GM12878 (cell line): ENCODE measurements at regions of chr4 and their contacts with region 1.

Region 1: GRCh38 chr4:25938787-25939186 is 24.8 kb downstream of the SMIM20 start:
- DNase-seq: peak; percentile 85
- ATAC-seq: peak; percentile 96
- H3K4me3 ChIP-seq: no peak overlapping the region; the same call in 1 of the 2 replicates
- H3K27ac ChIP-seq: no peak overlapping the region; the same call in 1 of the 2 replicates
- H3K4me1 ChIP-seq: peaks cover 11% of the 10 kb centered on the region; the same call in 1 of the 2 replicates
- H3K27me3 ChIP-seq: no peaks in the 10 kb centered on the region
- CTCF ChIP-seq: no peak
- EP300 ChIP-seq: peak in 1 of 2 experiments; percentile 50; a peak in 1 of 4 replicates
- POLR2A ChIP-seq: no peak
- RAD21 ChIP-seq: no peak

Region 2: DNA sequence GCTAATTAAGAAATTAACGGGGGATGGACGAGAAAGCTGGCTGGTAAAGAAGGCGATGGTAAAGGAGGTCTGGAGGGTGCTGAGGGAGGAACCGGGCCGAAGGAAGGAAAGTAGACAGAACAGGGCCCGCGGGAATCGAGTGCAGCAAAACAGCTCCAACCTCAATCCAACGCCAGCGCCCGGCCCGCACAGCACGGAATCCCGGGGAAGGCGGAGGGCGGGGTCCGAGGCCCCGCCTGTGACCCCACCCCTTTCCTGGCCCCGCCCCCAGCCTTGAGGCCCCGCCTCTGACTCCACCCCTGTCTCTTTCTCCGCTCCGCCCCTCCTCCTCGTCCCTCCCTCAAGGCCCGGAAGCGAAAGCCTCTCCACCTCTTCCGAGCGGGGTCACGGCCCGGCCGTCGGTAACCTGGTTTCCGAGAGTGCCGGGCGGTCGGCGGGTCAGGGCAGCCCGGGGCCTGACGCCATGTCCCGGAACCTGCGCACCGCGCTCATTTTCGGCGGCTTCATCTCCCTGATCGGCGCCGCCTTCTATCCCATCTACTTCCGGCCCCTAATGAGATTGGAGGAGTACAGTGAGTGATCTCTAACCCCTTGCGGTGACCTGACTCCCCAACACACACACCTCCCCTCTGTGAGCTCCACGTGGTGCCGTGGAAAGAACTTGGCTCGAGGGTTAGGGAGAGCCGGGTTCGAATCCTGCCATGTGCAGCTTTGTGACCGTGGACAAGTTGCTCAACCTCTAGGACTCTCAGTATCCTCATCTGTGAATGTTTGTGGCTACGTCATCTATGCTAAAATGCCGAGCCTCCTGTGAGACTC is 24.7 kb before region 1 on chr4 and contains the start of gene SMIM20:
- CTCF ChIA-PET with region 1: no interaction called
- POLR2A ChIA-PET with region 1: no interaction called
- RAD21 ChIA-PET with region 1: interaction called, 5 read pairs
- SMC1A ChIA-PET with region 1: interaction called, 3 read pairs
- in situ Hi-C with region 1: no loop called
- intact Hi-C with region 1: loop called (anchors 1 kb)
- DNase-seq: peak; percentile 56
- ATAC-seq: peak; percentile 97
- H3K4me3 ChIP-seq: peak within 1 kb of the TSS; percentile 78
- H3K27ac ChIP-seq: peak within 1 kb of the TSS; percentile 84
- H3K4me1 ChIP-seq: peaks cover 18% of the 10 kb centered on the region
- H3K27me3 ChIP-seq: no peaks in the 10 kb centered on the region
- CTCF ChIP-seq: no peak
- EP300 ChIP-seq: no peak
- POLR2A ChIP-seq: peak; percentile 94
- RAD21 ChIP-seq: no peak
- polyA plus RNA-seq, gene SMIM20: 32.5 to 32.6 TPM